B cell (primary cell): ENCODE measurements at regions of chr11 and their contacts with region 1.

Region 1: DNA sequence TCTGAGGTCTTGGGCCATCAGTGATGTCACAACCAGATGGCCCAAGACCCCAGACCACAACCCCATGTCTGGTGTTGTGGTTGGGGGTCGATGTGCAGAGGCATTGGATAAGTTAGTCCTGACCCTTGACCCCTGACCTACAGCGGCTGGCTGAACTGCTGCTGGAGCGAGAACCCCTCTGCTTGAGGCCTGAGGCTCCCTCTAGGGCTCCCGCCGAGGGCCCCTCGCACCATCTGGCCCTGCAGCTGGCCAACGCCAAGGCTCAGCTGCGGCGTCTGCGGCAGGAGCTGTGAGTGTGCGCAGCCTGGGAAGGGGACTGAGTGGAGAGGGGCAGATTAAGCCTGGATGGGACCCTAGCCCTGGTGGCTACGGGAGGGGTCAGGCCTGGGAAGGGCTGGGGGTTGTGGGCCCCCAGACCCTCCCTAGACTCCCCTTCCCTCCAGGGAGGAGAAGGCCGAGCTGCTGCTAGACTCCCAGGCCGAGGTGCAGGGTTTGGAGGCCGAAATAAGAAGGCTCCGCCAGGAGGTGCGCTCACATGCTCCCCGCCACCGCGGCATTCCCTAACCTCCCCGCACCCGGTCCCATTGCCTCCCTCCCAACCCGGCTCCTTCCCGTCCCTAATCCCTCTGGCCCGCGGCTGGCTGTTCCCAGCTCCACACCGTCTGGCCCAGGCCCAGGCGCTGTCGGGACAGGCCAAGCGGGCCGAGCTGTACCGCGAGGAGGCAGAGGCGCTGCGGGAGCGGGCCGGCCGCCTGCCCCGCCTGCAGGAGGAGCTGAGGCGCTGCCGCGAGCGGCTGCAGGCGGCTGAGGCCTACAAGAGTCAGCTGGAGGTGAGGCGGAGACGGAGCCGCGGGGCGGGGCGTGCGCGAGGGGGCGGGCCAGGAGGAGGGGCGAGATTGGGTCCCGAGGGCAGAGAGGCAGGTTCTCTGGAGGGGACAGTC is 2.1 kb downstream of the CCDC88B start:
- DNase-seq: peak; percentile 88
- ATAC-seq: peak; percentile 46
- H3K4me3 ChIP-seq: peak overlapping the region in 2 of 5 experiments; percentile 15 to 19
- H3K4me3 Mint-ChIP-seq: peak overlapping the region; percentile 89
- H3K27ac ChIP-seq: peak overlapping the region in 1 of 2 donors; percentile 12
- H3K27ac Mint-ChIP-seq: no peak overlapping the region
- H3K4me1 ChIP-seq: peaks cover 30 to 39% of the 10 kb centered on the region in 2 donors
- H3K4me1 Mint-ChIP-seq: peaks cover 50% of the 10 kb centered on the region
- H3K27me3 ChIP-seq: no peaks in the 10 kb centered on the region
- H3K27me3 Mint-ChIP-seq: no peaks in the 10 kb centered on the region
- CTCF ChIP-seq: peak; percentile 43

Region 2: GRCh38 chr11:64216879-64217278 is 125.2 kb before region 1 on chr11:
- CTCF ChIA-PET with region 1: no interaction called
- POLR2A ChIA-PET with region 1: no interaction called
- intact Hi-C with region 1: no loop called
- DNase-seq: no peak
- ATAC-seq: peak; percentile 28
- H3K4me3 ChIP-seq: no peak overlapping the region
- H3K4me3 Mint-ChIP-seq: no peak overlapping the region
- H3K27ac ChIP-seq: no peak overlapping the region
- H3K27ac Mint-ChIP-seq: no peak overlapping the region
- H3K4me1 ChIP-seq: peaks cover 3 to 23% of the 10 kb centered on the region in 2 donors
- H3K4me1 Mint-ChIP-seq: peaks cover 22% of the 10 kb centered on the region
- H3K27me3 ChIP-seq: no peaks in the 10 kb centered on the region
- H3K27me3 Mint-ChIP-seq: no peaks in the 10 kb centered on the region
- CTCF ChIP-seq: no peak

Region 3: DNA sequence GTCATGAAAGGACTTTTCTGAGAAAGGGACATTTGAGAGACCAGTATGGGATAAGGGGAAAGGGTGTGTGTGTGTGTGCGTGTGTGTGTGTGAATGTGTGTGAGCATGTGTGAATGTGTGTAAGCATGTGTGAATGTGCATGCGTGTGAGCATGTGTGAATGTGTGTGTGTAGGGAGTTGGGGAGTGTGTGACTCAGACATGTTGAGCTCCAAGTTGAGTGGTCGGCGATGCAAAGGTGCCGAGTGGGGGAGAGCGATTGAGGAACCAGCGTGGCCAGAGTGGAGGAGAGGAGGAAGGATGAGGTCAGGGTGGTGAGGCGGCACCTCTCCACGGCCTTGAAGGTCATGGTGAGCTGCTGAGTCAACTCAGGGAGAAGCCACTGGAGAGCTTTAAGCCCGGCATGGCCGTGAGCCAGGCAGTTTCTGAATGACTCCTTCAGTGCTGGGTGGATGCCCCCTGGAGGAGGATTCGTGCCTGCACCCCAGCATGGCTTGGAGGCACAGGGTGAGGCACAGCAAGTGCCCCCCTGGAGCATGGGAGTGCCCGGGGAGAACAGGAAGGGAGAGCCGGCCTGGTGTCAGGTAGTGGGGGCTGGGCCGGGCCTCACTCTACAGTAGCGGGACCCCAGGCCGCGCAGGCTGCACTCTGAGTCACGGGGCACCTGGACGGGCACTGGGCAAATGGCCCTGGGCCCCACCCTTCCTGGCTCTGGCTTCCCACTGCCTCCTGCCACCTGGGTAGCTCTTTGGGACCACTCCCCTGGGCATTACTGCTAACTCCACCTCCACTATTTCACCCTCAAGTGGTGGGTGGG is 10.4 kb before region 1 on chr11:
- CTCF ChIA-PET with region 1: interaction called, 21 read pairs
- POLR2A ChIA-PET with region 1: interaction called, 8 read pairs
- intact Hi-C with region 1: no loop called
- DNase-seq: peak; percentile 69
- ATAC-seq: peak; percentile 23
- H3K4me3 ChIP-seq: no peak overlapping the region
- H3K4me3 Mint-ChIP-seq: peak overlapping the region; percentile 27
- H3K27ac ChIP-seq: no peak overlapping the region
- H3K27ac Mint-ChIP-seq: peak overlapping the region; percentile 57
- H3K4me1 ChIP-seq: peaks cover 20 to 32% of the 10 kb centered on the region in 2 donors
- H3K4me1 Mint-ChIP-seq: peaks cover 34% of the 10 kb centered on the region
- H3K27me3 ChIP-seq: no peaks in the 10 kb centered on the region
- H3K27me3 Mint-ChIP-seq: no peaks in the 10 kb centered on the region
- CTCF ChIP-seq: peak; percentile 66

Region 4: DNA sequence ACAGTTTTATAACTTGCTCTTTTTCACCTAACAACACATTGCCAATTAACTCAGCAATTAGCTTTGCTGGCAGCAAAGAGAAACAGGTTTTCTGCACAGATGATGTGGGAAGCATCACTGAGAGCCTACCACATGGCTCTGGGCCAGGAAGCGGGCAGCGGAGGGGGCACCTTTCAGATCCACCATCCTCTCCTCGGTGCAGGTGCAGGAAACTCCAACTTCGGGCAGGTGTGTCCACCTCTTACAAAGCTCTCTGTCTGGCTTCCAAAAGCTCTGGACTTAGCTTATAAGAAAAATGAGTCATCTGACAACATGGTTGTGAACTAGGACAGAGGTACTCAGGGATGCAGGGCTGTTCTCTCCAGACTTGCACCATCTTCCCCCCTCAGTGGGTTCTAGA is 93.9 kb after region 1 on chr11:
- CTCF ChIA-PET with region 1: no interaction called
- POLR2A ChIA-PET with region 1: no interaction called
- intact Hi-C with region 1: no loop called
- DNase-seq: no peak
- ATAC-seq: no peak
- H3K4me3 ChIP-seq: no peak overlapping the region
- H3K4me3 Mint-ChIP-seq: no peak overlapping the region
- H3K27ac ChIP-seq: no peak overlapping the region
- H3K27ac Mint-ChIP-seq: no peak overlapping the region
- H3K4me1 ChIP-seq: peaks cover 0 to 4% of the 10 kb centered on the region in 2 donors
- H3K4me1 Mint-ChIP-seq: peaks cover 3% of the 10 kb centered on the region
- H3K27me3 ChIP-seq: peaks cover 0 to 7% (median 1%) of the 10 kb centered on the region in 4 experiments
- H3K27me3 Mint-ChIP-seq: peaks cover 20% of the 10 kb centered on the region
- CTCF ChIP-seq: no peak